ENCODE measurements at regions of chr6 and their contacts with region 1.

Region 1: GRCh38 chr6:129730477-129731165 is 20.6 kb upstream of the ARHGAP18 start:
- DNase-seq: peak; percentile 58
- ATAC-seq: peak; percentile 77
- H3K4me3 ChIP-seq: peak overlapping the region in 1 of 3 experiments; percentile 17; a peak in 1 of 6 replicates
- H3K27ac ChIP-seq: no peak overlapping the region
- H3K4me1 ChIP-seq: peaks cover 36% of the 10 kb centered on the region
- H3K27me3 ChIP-seq: no peaks in the 10 kb centered on the region
- CTCF ChIP-seq: peak; percentile 87
- EP300 ChIP-seq: no peak
- POLR2A ChIP-seq: no peak
- RAD21 ChIP-seq: peak; percentile 92

Region 2: DNA sequence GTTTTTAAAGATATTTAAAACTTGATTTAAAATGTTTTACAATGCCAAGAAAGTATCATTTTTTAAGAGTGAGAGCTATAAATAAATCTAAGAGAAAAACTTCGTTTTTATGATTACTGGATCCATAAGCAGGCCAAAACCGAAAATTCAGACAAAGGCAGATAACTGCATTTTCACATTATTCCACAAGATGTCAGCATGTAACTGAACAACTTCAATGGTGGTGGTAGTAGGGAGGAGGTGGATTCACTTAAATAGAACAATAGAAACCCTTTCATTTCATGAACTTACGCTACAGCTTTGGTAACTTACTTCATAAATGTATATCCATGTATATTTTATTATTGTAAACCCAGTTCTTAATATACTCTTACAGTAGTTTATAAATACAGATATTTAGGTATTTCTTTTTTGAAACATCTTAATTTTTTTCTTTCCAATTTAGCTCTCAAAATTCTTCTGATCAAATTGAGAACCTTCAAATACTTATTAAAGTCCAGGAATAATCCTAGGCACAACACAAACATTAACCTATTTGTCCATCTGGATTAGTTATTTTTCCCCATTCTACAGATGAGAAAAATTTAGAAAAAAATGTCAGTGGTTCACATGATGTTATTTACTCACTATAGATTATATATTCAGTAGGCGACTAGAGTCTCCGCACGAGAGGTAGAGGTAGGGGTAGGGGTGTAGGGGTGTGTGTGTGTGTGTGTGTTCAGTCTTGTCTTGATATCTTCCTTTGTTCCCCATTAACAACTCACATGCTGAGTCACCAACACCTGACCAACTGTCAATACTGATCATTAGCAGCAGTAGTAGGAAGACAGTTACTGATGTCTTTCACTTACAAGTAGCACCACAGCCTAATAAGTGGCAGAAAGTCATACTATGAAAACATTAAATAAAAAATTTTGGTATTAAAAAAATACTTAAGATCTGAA is 132.1 kb before region 1 on chr6:
- CTCF ChIA-PET with region 1: interaction called, 55 read pairs
- POLR2A ChIA-PET with region 1: interaction called, 4 read pairs
- in situ Hi-C with region 1: loop called (anchors 5 kb)
- intact Hi-C with region 1: loop called (anchors 1 kb)
- DNase-seq: peak; percentile 67
- ATAC-seq: peak; percentile 47
- H3K4me3 ChIP-seq: no peak overlapping the region
- H3K27ac ChIP-seq: no peak overlapping the region
- H3K4me1 ChIP-seq: peaks cover 26% of the 10 kb centered on the region
- H3K27me3 ChIP-seq: no peaks in the 10 kb centered on the region
- CTCF ChIP-seq: peak; percentile 79
- EP300 ChIP-seq: no peak
- POLR2A ChIP-seq: no peak
- RAD21 ChIP-seq: peak; percentile 83

Region 3: DNA sequence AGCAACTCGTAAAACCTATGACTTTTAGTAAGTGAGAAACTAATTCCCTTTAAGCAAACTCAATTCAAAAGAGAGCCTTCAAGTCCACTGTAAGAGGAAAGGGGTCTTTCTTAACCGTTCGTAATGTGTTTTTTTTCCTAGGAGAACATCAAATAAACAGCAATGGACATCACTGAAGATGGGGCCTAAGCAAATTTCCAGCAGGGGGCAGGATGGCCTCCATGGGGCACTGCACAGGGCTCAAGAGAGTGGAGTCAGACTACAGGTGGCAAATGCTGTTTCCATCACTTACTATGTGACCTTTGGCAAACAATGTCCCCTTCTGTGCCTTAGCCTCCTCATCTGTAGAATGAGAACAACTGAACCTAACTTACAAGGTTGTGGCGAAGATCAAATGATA is 109.4 kb before region 1 on chr6:
- CTCF ChIA-PET with region 1: interaction called, 39 read pairs
- POLR2A ChIA-PET with region 1: no interaction called
- in situ Hi-C with region 1: no loop called
- intact Hi-C with region 1: loop called (anchors 1 kb)
- DNase-seq: peak; percentile 58
- ATAC-seq: peak; percentile 92
- H3K4me3 ChIP-seq: no peak overlapping the region
- H3K27ac ChIP-seq: no peak overlapping the region
- H3K4me1 ChIP-seq: no peaks in the 10 kb centered on the region
- H3K27me3 ChIP-seq: no peaks in the 10 kb centered on the region
- CTCF ChIP-seq: peak; percentile 67
- EP300 ChIP-seq: no peak
- POLR2A ChIP-seq: no peak
- RAD21 ChIP-seq: peak; percentile 66

Region 4: GRCh38 chr6:129667621-129668020 is 63.0 kb before region 1 on chr6:
- CTCF ChIA-PET with region 1: interaction called, 3 read pairs
- POLR2A ChIA-PET with region 1: interaction called, 3 read pairs
- in situ Hi-C with region 1: no loop called
- intact Hi-C with region 1: loop called (anchors 1 kb)
- DNase-seq: no peak
- ATAC-seq: no peak
- H3K4me3 ChIP-seq: no peak overlapping the region
- H3K27ac ChIP-seq: no peak overlapping the region
- H3K4me1 ChIP-seq: peaks cover 73% of the 10 kb centered on the region
- H3K27me3 ChIP-seq: no peaks in the 10 kb centered on the region
- CTCF ChIP-seq: no peak
- EP300 ChIP-seq: no peak
- POLR2A ChIP-seq: no peak
- RAD21 ChIP-seq: no peak

Region 5: DNA sequence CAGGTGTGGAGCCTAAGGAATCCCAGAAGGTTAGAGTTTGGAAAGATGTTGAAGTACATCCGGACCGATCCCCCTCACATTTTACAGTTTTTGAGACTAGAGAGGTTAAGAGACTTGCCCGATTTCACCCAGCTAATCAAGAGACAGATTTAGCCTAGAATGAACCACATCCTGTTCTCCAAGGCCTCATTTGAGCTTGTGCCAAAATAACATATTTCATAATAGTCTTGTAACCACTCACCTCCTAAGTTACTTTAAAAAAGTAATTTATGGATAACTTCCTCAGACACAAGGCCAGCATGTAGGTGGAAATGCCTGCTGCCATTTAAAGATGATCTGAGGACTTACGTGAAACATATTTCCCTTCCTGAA is 19.1 kb after region 1 on chr6:
- CTCF ChIA-PET with region 1: no interaction called
- POLR2A ChIA-PET with region 1: no interaction called
- in situ Hi-C with region 1: no loop called
- intact Hi-C with region 1: loop called (anchors 2 kb)
- DNase-seq: no peak
- ATAC-seq: no peak
- H3K4me3 ChIP-seq: no peak overlapping the region
- H3K27ac ChIP-seq: no peak overlapping the region
- H3K4me1 ChIP-seq: peaks cover 32% of the 10 kb centered on the region
- H3K27me3 ChIP-seq: no peaks in the 10 kb centered on the region
- CTCF ChIP-seq: no peak
- EP300 ChIP-seq: no peak
- POLR2A ChIP-seq: no peak
- RAD21 ChIP-seq: no peak

Region 6: GRCh38 chr6:130020907-130021629 is 290.4 kb after region 1 on chr6:
- CTCF ChIA-PET with region 1: no interaction called
- POLR2A ChIA-PET with region 1: no interaction called
- in situ Hi-C with region 1: no loop called
- intact Hi-C with region 1: loop called (anchors 1 kb)
- DNase-seq: peak; percentile 81
- ATAC-seq: peak; percentile 85
- H3K4me3 ChIP-seq: peak overlapping the region; percentile 54 to 78 (median 62)
- H3K27ac ChIP-seq: no peak overlapping the region
- H3K4me1 ChIP-seq: peaks cover 5% of the 10 kb centered on the region; the same call in 1 of the 2 replicates
- H3K27me3 ChIP-seq: peaks cover 0 to 38% of the 10 kb centered on the region in 2 experiments; a peak in 3 of 5 replicates
- CTCF ChIP-seq: peak; percentile 93
- EP300 ChIP-seq: 0 out of 4 replicates have a peak, but pooled peaks of 1 of the 2 experiments have one; percentile 29
- POLR2A ChIP-seq: no peak
- RAD21 ChIP-seq: peak; percentile 74

Measured in HepG2 (cell line).